Left cardiac atrium (tissue), 4 donors: ENCODE measurements at regions of chr10 and their contacts with region 1.

Region 1: GRCh38 chr10:26881600-26882331 is 21.0 kb upstream of the ABI1 start:
- DNase-seq: no peak
- ATAC-seq: peak; percentile 75 to 81

Region 2: GRCh38 chr10:26682931-26683330 is 198.8 kb before region 1 on chr10:
- intact Hi-C with region 1: loop called (anchors 5 kb)
- DNase-seq: no peak
- ATAC-seq: no peak

Region 3: DNA sequence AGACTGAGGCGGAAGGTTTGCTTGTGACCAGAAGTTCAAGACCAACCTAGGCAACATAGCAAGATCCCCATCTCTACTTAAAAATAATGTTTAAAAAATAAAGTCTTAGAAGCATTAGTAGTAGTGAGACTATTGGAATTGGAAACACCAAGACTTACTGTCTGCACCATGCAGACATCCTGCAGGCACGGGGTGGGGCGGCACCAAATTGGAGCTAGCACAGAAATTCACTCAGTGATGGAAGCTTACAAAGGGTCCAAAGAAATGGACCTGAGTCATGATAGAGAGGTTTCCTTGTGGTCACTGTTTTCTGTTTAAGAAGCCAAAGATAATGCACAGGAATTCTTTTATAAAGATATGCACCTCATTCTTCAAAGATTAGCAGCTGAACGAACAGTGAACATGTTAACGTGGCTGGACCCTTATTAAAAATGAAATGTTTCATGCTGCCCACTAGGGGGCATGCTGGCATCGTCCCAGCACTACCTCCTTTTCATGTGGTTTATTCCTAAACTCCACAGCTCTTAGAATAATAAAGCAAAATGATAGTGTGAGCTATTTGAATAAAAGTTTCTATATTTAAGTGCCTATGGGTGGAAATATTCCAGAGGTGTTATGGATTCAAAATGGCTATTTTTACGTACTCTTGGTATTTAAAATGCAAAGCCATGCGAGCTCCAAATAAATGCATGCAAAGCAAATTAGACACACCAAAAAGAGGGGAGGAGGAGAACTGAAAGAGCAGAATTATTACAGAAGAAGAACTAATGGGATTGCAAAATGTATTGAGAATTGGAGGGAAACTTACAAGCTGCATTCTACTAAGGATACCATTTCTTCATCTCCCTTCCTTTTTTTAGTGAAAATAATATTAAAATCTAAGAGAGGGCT is 155.7 kb before region 1 on chr10:
- intact Hi-C with region 1: loop called (anchors 5 kb)
- DNase-seq: peak; percentile 64
- ATAC-seq: peak; percentile 68